ENCODE measurements at regions of chr6 and their contacts with region 1.

Region 1: DNA sequence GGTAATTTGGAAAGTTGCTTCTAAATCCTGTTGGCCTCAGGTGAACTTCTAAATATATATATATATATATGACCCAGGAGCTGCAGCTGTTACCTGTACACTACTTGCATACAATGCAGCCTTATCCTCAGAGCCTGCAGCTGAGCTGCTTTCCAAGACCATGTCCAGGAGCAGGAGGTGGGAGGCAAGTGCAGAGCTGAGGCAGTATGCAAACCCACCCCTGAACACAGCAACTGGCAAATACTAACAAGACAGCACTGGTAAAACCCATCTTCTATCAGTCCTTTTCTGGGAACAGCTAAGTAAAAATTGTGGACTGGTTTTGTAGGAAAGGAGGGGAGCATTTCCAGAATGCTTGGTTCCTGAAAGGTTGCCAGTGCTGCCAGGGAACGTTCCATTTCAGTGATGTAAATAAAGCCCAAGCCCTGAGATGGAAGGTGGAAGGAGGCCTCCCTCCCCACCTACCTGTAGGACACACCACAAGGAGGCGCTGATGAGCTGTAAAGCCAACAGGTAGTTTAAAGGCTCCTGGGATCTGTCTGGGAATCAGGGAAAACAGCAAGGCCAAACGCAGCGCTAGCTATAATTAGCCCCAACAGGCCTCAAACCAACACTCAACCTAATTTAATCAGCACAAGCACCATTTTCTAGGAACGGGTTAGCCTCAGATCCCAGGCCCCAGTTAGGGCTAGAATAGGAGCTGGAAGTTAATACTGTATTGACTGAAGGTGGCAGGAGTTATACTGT is 93.8 kb upstream of the MAP7 start:
- DNase-seq: peak; percentile 75 to 82 (median 78)
- H3K4me3 ChIP-seq: peak overlapping the region in 1 of 7 experiments; percentile 48
- H3K27ac ChIP-seq: no peak overlapping the region
- H3K4me1 ChIP-seq: peaks cover 0 to 17% (median 3%) of the 10 kb centered on the region in 4 experiments
- H3K27me3 ChIP-seq: no peaks in the 10 kb centered on the region

Region 2: DNA sequence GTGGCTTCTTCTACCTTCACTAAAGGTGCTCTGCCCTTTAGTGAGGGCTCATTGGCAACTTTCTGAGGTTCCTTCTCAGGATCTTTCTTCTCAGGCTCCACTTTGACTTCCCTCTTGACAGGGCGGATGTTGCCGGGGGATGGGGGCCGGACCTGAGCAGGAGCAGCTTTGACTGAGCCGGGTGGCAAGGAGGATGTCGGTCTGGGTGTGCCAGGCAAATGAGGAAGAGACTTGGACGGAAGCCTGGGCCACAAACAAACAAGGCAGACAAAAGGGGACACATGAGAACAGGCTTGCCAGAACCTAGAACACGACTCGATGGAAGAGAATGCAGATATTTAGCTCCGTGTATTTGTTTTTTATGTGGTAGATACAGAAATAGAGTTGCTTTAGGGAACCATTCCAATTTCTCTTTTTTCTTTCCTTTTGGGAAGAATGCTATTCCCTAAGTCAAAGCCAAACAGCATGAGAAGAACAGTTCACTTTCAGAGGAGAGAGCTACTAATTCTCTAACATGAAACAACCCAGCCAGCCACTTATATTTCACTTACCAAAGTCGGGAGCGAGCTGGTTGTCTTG is 278.2 kb before region 1 on chr6:
- CTCF ChIA-PET with region 1: no interaction called
- POLR2A ChIA-PET with region 1: no interaction called
- DNase-seq: peak; percentile 77 to 95 (median 92)
- H3K4me3 ChIP-seq: peak overlapping the region in 3 of 7 experiments; percentile 47 to 54 (median 52)
- H3K27ac ChIP-seq: peak overlapping the region; percentile 21 to 73
- H3K4me1 ChIP-seq: peaks cover 8 to 21% (median 15%) of the 10 kb centered on the region in 4 experiments
- H3K27me3 ChIP-seq: no peaks in the 10 kb centered on the region

Region 3: DNA sequence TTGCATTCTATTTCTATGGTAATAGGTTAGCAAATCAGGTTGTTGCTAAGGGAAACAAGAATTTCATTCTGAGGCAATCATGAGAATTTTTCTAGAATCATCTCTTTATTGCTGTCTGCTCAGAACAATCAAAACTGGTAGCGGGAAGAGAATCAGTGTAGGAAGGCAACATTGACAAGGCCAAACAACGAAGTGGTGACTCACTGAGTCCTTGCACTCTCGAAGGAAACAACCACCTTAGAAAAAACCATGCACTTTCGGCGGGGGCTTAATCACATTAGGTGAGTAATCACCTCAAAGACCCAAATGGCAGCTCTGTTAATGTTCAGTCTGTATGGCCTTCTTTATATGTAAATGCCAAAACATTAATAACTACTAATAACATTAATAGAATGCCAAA is 15.0 kb before region 1 on chr6:
- CTCF ChIA-PET with region 1: interaction called, 41 read pairs
- POLR2A ChIA-PET with region 1: no interaction called
- DNase-seq: peak in 1 of 3 donors; percentile 6
- H3K4me3 ChIP-seq: no peak overlapping the region
- H3K27ac ChIP-seq: no peak overlapping the region
- H3K4me1 ChIP-seq: no peaks in the 10 kb centered on the region
- H3K27me3 ChIP-seq: no peaks in the 10 kb centered on the region

Region 4: GRCh38 chr6:136669299-136669699 is 25.3 kb after region 1 on chr6:
- CTCF ChIA-PET with region 1: interaction called, 12 read pairs
- POLR2A ChIA-PET with region 1: no interaction called
- DNase-seq: peak in 1 of 3 donors; percentile 37
- H3K4me3 ChIP-seq: no peak overlapping the region
- H3K27ac ChIP-seq: no peak overlapping the region
- H3K4me1 ChIP-seq: no peaks in the 10 kb centered on the region
- H3K27me3 ChIP-seq: no peaks in the 10 kb centered on the region

Region 5: GRCh38 chr6:136719280-136720044 is 75.4 kb after region 1 on chr6:
- CTCF ChIA-PET with region 1: interaction called, 42 read pairs
- POLR2A ChIA-PET with region 1: no interaction called
- DNase-seq: no peak
- H3K4me3 ChIP-seq: no peak overlapping the region
- H3K27ac ChIP-seq: peak overlapping the region in 1 of 2 experiments; percentile 2
- H3K4me1 ChIP-seq: peaks cover 5 to 47% (median 38%) of the 10 kb centered on the region in 4 experiments
- H3K27me3 ChIP-seq: no peaks in the 10 kb centered on the region

Region 6: DNA sequence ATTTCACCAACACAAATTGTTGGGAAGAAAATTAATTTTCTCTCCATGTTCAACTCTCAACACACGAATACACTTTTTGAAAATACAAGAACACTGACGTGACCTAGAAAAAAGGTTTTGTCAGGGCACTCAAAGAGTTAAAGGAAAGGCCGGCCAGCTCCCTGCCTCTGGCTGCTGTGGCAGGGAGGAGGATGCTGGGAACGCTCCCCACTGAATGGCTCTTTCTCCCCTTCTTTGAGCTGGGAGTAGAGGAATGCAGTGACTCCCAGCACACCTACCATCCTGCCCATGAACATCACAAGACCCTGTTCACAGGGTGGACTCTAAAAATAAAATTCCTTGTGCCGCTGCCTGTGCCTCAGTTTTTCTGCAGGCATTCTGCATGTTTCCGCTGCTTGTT is 101.3 kb after region 1 on chr6:
- CTCF ChIA-PET with region 1: interaction called, 29 read pairs
- POLR2A ChIA-PET with region 1: no interaction called
- DNase-seq: no peak
- H3K4me3 ChIP-seq: no peak overlapping the region
- H3K27ac ChIP-seq: no peak overlapping the region
- H3K4me1 ChIP-seq: peaks cover 4 to 27% (median 11%) of the 10 kb centered on the region in 4 experiments
- H3K27me3 ChIP-seq: no peaks in the 10 kb centered on the region

Region 7: DNA sequence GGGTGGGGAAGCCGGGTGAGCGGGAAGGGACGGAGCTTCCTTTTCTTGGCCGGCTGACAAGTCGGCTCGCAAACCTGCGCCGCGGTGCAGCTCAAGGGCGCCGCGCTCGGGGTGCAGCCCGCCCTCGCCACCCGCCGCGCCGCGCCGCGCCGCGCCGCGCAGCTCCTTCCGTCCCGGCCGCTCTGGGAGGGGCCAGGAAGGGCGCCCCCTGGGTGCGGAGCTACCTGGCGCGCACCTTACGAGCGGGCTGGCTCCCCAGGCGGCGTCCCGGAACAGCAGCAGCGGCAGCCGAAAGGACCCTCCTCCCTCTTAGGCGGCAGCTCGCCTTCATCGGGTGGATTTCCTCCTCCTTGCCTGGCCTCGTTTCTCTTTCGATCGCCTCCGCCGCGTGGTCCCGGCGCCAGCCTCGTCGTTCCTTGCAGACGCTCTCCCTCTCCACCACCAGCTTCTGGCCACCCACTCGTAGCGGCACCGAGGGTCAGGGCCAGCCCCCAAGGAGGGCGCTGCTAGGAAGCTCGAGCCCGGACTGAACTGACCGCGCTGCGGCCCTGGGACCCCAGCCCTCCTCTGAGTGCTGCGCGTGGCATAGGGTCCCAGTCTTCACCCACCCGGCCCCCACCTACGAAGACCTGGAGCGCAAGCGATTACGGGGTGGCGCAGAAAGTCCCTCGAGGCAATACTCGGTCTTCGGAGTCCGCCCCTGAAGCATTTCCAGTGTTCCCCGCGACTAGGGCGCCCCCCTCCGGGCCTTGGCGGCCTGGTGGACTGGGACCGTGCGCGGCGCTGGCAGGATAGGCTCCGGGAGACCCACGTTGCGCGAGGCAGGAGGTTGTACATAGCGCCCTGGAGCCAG is 148.6 kb after region 1 on chr6 and contains the start of gene MAP3K5:
- CTCF ChIA-PET with region 1: interaction called, 211 read pairs
- POLR2A ChIA-PET with region 1: interaction called, 10 read pairs
- DNase-seq: peak; percentile 93 to 98 (median 97)
- H3K4me3 ChIP-seq: peak within 1 kb of the TSS; percentile 73 to 96 (median 92)
- H3K27ac ChIP-seq: peak within 1 kb of the TSS; percentile 83 to 95
- H3K4me1 ChIP-seq: peaks cover 23 to 39% (median 31%) of the 10 kb centered on the region in 4 experiments
- H3K27me3 ChIP-seq: no peaks in the 10 kb centered on the region

Region 8: DNA sequence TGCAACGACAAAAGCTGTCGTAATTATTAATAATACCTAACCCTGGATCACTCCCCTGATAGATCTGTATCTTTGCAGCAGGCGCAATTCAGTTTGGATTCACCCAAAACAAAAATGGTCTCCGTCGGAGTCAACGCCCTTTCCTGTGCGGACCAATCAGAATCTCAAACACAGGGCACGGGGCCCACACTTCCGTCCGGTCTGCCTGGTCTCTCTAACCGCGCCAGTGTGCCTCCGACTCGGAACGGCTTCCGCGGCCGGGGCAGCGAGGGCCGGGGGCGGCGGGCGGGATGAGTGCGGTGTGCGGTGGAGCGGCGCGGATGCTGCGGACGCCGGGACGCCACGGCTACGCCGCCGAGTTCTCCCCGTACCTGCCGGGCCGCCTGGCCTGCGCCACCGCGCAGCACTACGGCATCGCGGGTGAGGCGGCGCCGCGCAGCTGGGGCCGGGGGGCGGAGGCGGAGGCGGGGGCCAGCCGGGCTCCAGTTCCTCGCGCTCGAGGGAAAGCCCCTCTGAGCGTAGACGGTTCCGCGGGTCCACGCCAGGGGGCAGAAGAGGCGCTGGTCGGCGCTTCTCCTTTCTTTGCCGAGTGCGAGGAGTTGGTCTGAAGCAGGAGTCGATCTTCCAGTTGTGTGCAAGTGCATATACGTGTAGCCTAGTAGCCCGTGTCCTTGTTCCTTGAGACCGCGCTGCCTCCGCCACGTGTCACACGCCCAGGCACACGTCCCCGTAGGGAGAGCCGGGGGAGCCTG is 178.5 kb after region 1 on chr6 and contains the start of gene PEX7:
- CTCF ChIA-PET with region 1: interaction called, 10 read pairs
- POLR2A ChIA-PET with region 1: no interaction called
- DNase-seq: peak; percentile 93 to 97 (median 97)
- H3K4me3 ChIP-seq: peak within 1 kb of the TSS; percentile 28 to 96 (median 81)
- H3K27ac ChIP-seq: peak within 1 kb of the TSS; percentile 80 to 86
- H3K4me1 ChIP-seq: peaks cover 0 to 14% (median 10%) of the 10 kb centered on the region in 4 experiments
- H3K27me3 ChIP-seq: no peaks in the 10 kb centered on the region